CD4-positive, alpha-beta memory T cell (primary cell): ENCODE measurements at regions of chr11 and their contacts with region 1.

Region 1: DNA sequence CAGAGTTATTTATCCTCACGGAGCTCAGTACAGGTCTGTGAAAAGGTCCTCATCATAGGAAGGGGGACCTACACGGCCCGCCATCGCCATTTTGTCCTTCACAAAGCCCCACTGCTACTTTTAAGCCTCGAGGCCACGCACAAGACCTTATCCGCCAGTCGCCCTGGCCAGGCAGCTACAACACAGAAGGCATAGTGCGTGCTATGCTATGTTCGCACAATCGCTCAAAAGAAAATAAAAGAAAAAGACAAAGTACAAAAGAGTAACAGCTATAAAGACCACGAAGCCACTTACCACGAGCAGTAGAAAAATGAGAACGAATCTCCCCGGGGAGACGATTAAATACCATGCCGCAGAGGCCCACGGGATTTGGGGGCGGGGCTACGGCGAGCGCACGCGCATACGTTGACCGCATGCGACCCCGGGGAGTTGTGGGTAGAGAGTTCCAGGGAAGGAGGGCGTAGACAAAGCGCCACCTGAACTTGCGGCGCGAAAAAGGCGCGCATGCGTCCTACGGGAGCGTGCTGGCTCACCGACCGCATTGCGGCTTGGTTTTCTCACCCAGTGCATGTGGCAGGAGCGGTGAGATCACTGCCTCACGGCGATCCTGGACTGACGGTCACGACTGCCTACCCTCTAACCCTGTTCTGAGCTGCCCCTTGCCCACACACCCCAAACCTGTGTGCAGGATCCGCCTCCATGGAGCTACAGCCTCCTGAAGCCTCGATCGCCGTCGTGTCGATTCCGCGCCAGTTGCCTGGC is 16.4 kb upstream of the WDR74 start:
- DNase-seq: peak; percentile 98 to 99 (median 99)
- H3K4me3 ChIP-seq: peak overlapping the region; percentile 89 to 91
- H3K4me3 Mint-ChIP-seq: peak overlapping the region; percentile 95 to 99 (median 96)
- H3K27ac ChIP-seq: peak overlapping the region; percentile 78
- H3K27ac Mint-ChIP-seq: peak overlapping the region; percentile 93 to 98 (median 95)
- H3K4me1 ChIP-seq: peaks cover 57% of the 10 kb centered on the region
- H3K4me1 Mint-ChIP-seq: peaks cover 41 to 67% (median 55%) of the 10 kb centered on the region in 4 donors
- H3K27me3 ChIP-seq: no peaks in the 10 kb centered on the region
- H3K27me3 Mint-ChIP-seq: no peaks in the 10 kb centered on the region

Region 2: GRCh38 chr11:62573592-62574362 is 282.0 kb before region 1 on chr11 and contains the start of gene EEF1G:
- CTCF ChIA-PET with region 1: no interaction called
- POLR2A ChIA-PET with region 1: interaction called, 10 read pairs
- intact Hi-C with region 1: no loop called
- DNase-seq: peak; percentile 98 to 100 (median 100)
- H3K4me3 ChIP-seq: peak within 1 kb of the TSS; percentile 89 to 100
- H3K4me3 Mint-ChIP-seq: peak within 1 kb of the TSS; percentile 92 to 98 (median 98)
- H3K27ac ChIP-seq: peak within 1 kb of the TSS; percentile 77
- H3K27ac Mint-ChIP-seq: peak within 1 kb of the TSS; percentile 94 to 98 (median 97)
- H3K4me1 ChIP-seq: peaks cover 44% of the 10 kb centered on the region
- H3K4me1 Mint-ChIP-seq: peaks cover 34 to 60% (median 47%) of the 10 kb centered on the region in 4 donors
- H3K27me3 ChIP-seq: no peaks in the 10 kb centered on the region
- H3K27me3 Mint-ChIP-seq: no peaks in the 10 kb centered on the region
- total RNA-seq, gene EEF1G: 1,815 to 1,855 TPM

Region 3: DNA sequence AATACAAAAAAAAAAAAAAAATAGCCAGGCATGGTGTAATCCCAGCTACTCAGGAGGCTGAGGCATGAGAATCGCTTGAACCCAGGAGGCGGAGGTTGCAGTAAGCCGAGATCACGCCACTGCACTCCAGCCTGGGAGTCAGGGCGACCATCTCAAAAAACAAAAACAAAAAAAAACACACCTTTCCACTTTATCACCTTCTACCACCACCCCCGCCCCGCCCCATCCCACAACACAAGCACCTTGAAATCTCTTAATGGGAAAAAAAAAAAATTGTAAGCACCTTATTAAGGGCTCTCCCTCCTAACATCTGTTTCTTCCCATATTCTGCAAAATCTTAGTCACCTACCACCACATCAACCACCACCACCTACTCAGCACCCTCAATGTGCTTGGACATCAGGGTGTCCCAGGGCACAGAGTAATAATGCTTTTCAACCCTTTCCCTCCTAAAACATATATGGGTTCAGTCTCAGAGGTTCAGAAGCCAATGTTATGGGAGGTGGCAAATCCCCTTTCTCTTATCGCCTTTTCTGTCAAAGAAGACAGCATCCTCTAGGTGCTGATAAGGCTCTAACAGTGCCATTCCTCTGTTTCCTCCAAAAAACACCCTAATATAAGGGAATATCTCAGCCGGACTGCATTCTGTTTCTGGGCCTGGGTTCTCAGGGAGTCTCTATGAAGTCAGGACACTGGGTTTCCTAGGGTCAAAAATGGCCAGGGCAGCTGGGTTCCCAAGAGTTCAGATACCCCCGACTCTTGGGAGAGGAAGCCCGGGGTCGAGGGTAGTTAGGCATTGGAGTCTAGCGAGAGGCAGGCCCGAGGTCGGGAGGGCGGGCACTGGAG is 203.4 kb before region 1 on chr11:
- CTCF ChIA-PET with region 1: no interaction called
- POLR2A ChIA-PET with region 1: interaction called, 11 read pairs
- intact Hi-C with region 1: no loop called
- DNase-seq: peak in 3 of 5 donors; percentile 54 to 83 (median 68)
- H3K4me3 ChIP-seq: peak overlapping the region; percentile 92 to 97
- H3K4me3 Mint-ChIP-seq: peak overlapping the region; percentile 86 to 94 (median 92)
- H3K27ac ChIP-seq: peak overlapping the region; percentile 93
- H3K27ac Mint-ChIP-seq: peak overlapping the region; percentile 78 to 100 (median 94)
- H3K4me1 ChIP-seq: peaks cover 24% of the 10 kb centered on the region
- H3K4me1 Mint-ChIP-seq: peaks cover 13 to 40% (median 22%) of the 10 kb centered on the region in 4 donors
- H3K27me3 ChIP-seq: no peaks in the 10 kb centered on the region
- H3K27me3 Mint-ChIP-seq: no peaks in the 10 kb centered on the region

Region 4: DNA sequence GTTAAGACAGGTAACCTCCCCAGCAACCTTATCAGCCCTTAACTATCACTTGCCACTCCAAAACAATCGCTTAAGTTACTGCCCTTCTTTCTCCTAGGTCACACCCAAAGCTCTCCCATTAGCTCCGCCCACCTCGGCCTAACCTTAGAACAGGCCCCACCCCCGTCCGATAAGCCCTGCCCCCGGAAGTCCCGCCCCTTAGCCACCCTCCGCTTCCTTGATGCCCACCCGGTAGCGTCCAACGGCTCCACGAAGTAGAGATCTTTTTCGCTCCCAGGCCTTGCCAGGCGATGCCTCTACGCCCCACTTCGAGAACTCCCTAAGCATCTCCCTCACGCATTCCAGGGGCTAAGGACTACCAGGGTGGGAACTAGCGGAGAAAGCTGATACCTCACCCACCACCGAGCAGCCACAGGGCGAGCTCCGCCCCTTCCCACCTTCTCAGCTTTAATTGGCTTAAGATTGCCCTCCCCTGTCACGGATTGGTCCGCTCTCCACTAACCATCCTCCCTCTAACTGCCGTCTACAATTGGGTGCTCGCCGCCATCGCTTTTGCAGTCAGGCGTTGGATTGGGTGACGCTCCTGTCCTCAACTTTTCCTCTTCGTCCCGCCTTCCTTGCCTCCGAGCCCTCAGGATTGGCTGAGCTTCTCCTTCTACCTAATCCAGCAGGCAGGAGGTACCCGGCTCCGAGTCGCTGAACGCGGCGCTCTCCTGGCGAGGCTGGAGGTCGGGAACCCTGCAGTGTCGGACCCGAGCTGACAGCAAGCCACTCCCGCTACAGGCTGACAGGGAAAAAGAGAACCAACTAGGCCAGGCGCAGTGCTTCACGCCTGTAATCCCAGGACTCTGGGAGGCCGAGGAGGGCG is 101.8 kb before region 1 on chr11 and contains the start of gene ZBTB3:
- CTCF ChIA-PET with region 1: interaction called, 9 read pairs
- POLR2A ChIA-PET with region 1: interaction called, 60 read pairs
- intact Hi-C with region 1: loop called (anchors 1 kb)
- DNase-seq: peak; percentile 99
- H3K4me3 ChIP-seq: peak within 1 kb of the TSS; percentile 68 to 98
- H3K4me3 Mint-ChIP-seq: peak within 1 kb of the TSS; percentile 96 to 99 (median 98)
- H3K27ac ChIP-seq: peak within 1 kb of the TSS; percentile 90
- H3K27ac Mint-ChIP-seq: peak within 1 kb of the TSS; percentile 94 to 100 (median 99)
- H3K4me1 ChIP-seq: peaks cover 45% of the 10 kb centered on the region
- H3K4me1 Mint-ChIP-seq: peaks cover 15 to 41% (median 25%) of the 10 kb centered on the region in 4 donors
- H3K27me3 ChIP-seq: no peaks in the 10 kb centered on the region
- H3K27me3 Mint-ChIP-seq: no peaks in the 10 kb centered on the region
- total RNA-seq, gene ZBTB3: 27.2 to 27.9 TPM

Region 5: GRCh38 chr11:62787005-62787759 is 68.6 kb before region 1 on chr11 and contains the start of gene TMEM179B:
- CTCF ChIA-PET with region 1: interaction called, 105 read pairs
- POLR2A ChIA-PET with region 1: interaction called, 263 read pairs
- intact Hi-C with region 1: loop called (anchors 1 kb)
- DNase-seq: peak; percentile 95 to 99 (median 96)
- H3K4me3 ChIP-seq: peak within 1 kb of the TSS; percentile 73 to 95
- H3K4me3 Mint-ChIP-seq: peak within 1 kb of the TSS; percentile 93 to 97 (median 96)
- H3K27ac ChIP-seq: peak within 1 kb of the TSS; percentile 84
- H3K27ac Mint-ChIP-seq: peak within 1 kb of the TSS; percentile 89 to 98 (median 97)
- H3K4me1 ChIP-seq: peaks cover 45% of the 10 kb centered on the region
- H3K4me1 Mint-ChIP-seq: peaks cover 29 to 61% (median 47%) of the 10 kb centered on the region in 4 donors
- H3K27me3 ChIP-seq: no peaks in the 10 kb centered on the region
- H3K27me3 Mint-ChIP-seq: no peaks in the 10 kb centered on the region
- total RNA-seq, gene TMEM179B: 66.3 to 66.6 TPM

Region 6: DNA sequence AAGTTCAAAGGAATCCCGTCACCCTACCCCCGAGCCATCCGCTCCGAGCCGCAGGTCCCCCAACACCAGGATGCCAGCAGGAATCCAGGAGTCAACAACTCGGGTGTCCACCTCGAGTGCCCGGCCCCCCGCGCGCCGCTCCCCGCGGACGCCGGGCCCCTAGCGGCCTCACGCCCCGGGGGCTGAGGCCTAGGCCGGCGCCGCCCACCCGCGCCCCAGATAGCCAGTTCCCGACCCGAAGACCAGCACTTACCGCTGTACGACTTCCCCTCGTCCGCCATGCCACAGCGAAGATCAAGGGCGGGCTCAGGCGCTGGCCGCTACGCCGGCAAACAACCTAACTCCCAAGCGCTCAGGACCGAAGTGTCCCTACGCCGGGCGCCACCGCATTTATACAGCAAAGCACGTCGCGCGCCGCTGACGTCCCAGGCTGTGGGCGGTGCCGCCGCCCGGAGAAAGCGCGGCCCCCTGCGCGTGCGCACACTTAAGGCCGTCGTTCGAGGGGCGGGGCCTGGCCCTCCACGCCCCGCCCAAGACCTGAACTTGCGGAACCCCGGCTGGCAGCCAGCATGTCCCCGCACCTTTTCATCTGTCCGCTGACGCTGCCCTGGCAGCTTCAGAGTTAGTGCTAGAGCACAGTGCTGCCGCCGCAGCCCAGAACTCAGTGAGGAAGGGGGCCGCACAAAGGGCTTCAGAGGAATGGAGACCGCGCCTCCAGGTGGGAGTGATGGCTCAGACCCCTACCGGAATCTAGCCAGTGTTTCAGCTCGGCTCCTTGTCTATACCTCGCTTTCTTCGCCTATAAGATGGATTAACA is 50.5 kb before region 1 on chr11 and contains the start of gene NXF1:
- CTCF ChIA-PET with region 1: interaction called, 3 read pairs
- POLR2A ChIA-PET with region 1: interaction called, 76 read pairs
- intact Hi-C with region 1: loop called (anchors 1 kb)
- DNase-seq: peak; percentile 90 to 98 (median 96)
- H3K4me3 ChIP-seq: peak within 1 kb of the TSS; percentile 87 to 93
- H3K4me3 Mint-ChIP-seq: peak within 1 kb of the TSS; percentile 97 to 100 (median 99)
- H3K27ac ChIP-seq: peak within 1 kb of the TSS; percentile 94
- H3K27ac Mint-ChIP-seq: peak within 1 kb of the TSS; percentile 97 to 100 (median 99)
- H3K4me1 ChIP-seq: peaks cover 22% of the 10 kb centered on the region
- H3K4me1 Mint-ChIP-seq: peaks cover 20 to 43% (median 31%) of the 10 kb centered on the region in 4 donors
- H3K27me3 ChIP-seq: no peaks in the 10 kb centered on the region
- H3K27me3 Mint-ChIP-seq: peaks cover 0 to 2% of the 10 kb centered on the region in 2 donors
- total RNA-seq, gene NXF1: 195 to 196 TPM

Region 7: DNA sequence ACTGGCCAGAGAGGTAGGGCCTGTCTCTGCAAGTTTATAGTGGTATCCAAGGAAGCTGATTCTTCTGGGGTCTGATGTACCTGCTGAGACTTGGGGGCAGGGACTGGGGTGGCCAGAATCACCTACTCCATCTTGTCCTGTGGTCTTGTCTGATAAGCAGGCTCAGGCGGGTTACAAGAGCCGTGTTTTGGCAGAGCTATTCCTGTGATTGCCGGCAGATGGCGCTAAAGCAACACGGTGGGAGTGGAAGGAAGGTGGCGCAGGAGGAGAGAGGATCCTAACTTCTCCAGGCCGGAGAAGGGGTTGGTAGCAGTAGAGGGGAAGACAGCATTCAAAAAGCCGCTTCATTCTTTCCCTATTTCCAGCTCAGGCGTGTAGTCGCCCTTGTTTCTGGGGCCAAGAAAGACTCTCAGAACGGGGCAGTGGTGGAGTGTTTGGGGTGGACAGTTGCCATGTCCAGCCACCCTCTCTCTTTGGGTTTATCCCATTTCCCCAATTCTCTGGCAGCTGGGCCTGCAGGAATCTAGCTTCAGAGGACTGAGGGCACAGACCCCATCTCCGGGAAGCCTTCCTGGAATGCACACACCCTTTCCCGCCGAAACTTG is 50.3 kb after region 1 on chr11:
- CTCF ChIA-PET with region 1: no interaction called
- POLR2A ChIA-PET with region 1: no interaction called
- intact Hi-C with region 1: no loop called
- DNase-seq: peak; percentile 66 to 73 (median 71)
- H3K4me3 ChIP-seq: no peak overlapping the region
- H3K4me3 Mint-ChIP-seq: no peak overlapping the region
- H3K27ac ChIP-seq: no peak overlapping the region
- H3K27ac Mint-ChIP-seq: peak overlapping the region in 1 of 7 donors; percentile 53
- H3K4me1 ChIP-seq: no peaks in the 10 kb centered on the region
- H3K4me1 Mint-ChIP-seq: peaks cover 0 to 4% (median 2%) of the 10 kb centered on the region in 4 donors
- H3K27me3 ChIP-seq: no peaks in the 10 kb centered on the region
- H3K27me3 Mint-ChIP-seq: peaks cover 7 to 17% of the 10 kb centered on the region in 2 donors